Dendritic cell treated with granulocyte-macrophage colony-stimulating factor and Interleukin-4, amounts not matched to agents 40 ng/mL and 50 ng/mL, for 4 days (primary cell): ENCODE measurements at regions of chr10 and their contacts with region 1.

Region 1: DNA sequence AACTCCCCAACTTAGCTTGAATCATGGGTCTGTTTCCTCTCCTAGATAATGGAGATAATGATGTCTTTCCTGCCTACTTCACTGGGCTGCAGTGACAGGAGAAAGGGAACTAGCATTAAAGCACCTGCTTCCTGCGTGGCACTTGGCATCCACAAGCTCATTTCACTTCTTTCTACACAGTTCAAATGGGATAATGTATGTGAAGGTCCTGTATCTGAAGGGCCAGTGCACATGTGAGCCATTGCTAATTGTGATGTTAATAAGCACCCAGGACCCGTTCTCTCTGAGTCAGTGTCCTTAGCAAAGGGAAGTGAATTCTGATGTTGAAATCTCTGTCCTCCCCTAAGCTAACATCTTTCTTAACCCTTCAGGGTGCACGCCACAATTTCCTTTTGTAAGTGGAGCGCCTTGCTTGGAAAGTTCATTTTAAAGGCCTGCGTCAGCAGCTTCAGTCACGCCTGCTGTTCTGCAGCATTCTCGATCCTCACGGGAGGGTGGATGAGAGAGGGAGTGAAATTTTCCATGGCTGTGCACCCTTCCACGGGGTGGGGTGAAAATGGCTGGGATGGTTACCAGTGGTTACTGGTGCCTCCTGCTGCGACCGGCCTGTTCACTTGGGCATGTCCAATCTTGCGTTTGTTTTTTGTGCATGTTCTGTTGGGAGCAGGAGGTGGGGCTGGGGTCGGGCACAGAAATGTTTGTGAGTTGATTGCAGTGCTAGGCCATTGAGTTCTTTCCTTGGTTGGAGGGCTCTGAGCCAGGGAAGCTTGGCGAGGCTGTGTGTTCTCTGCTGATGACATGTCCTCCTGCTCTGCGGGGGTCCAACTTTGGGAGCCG is 59.2 kb downstream of the HK1 start:
- H3K4me3 Mint-ChIP-seq: peak overlapping the region; percentile 40
- H3K27ac Mint-ChIP-seq: peak overlapping the region; percentile 64
- H3K4me1 Mint-ChIP-seq: peaks cover 80% of the 10 kb centered on the region
- H3K27me3 Mint-ChIP-seq: no peaks in the 10 kb centered on the region

Region 2: GRCh38 chr10:69318106-69318866 is 19.2 kb before region 1 on chr10:
- intact Hi-C with region 1: loop called (anchors 2 kb)
- H3K4me3 Mint-ChIP-seq: peak overlapping the region; percentile 87
- H3K27ac Mint-ChIP-seq: peak overlapping the region; percentile 87
- H3K4me1 Mint-ChIP-seq: peaks cover 44% of the 10 kb centered on the region
- H3K27me3 Mint-ChIP-seq: no peaks in the 10 kb centered on the region

Region 3: GRCh38 chr10:69348816-69349541 is 11.5 kb after region 1 on chr10:
- intact Hi-C with region 1: loop called (anchors 1 kb)
- H3K4me3 Mint-ChIP-seq: no peak overlapping the region
- H3K27ac Mint-ChIP-seq: peak overlapping the region; percentile 81
- H3K4me1 Mint-ChIP-seq: peaks cover 63% of the 10 kb centered on the region
- H3K27me3 Mint-ChIP-seq: no peaks in the 10 kb centered on the region